Ovary (tissue), 10 donors: ENCODE measurements at regions of chr2 and their contacts with region 1.

Region 1: DNA sequence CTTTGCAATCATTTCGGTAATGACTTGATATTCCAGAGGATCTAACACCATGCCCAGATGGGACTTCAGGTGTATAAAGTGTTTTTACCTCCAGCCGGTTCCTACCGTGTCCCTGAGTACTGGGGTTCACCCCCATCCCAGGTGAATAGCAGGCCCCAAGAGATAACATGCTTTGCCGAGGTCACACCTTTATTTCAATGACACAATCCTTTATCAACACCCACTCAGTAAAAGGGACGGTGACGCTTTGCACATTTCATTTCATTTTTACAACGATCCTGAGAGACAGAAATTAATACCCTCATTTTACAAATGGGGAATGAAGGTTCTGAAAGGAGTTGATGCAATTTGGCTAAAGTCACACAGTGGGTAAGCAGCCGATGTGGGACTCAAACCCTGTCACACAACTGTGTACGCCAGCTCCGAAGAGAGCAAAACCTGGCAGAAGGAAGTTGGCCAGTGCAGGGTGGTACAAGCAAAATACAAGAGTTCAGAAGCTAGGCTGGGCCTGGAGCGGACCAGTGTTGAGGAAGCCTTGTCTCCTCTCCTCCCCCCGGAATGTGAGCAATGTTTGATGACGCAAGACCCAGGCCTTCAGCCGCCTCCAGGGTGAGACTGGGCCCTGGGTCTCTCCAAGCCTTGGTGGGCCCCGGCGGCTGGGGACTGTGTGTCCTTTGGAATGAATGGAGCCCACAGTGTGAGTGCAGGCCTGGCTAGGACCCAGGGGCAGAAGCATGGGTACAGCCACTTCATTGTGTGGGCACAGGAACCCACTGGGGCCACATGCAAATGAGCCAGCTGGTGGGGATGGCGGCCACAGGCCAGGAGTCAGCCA is 139.6 kb upstream of the MYCN start:
- DNase-seq: no peak
- H3K4me3 ChIP-seq: no peak overlapping the region
- H3K27ac ChIP-seq: no peak overlapping the region
- H3K4me1 ChIP-seq: no peaks in the 10 kb centered on the region
- H3K27me3 ChIP-seq: no peaks in the 10 kb centered on the region
- CTCF ChIP-seq: no peak
- EP300 ChIP-seq: no peak
- POLR2A ChIP-seq: no peak

Region 2: GRCh38 chr2:15730545-15731212 is 70.0 kb before region 1 on chr2:
- intact Hi-C with region 1: loop called in 1 of 4 experiments (anchors 5 kb)
- DNase-seq: peak; percentile 96 to 99 (median 98)
- H3K4me3 ChIP-seq: no peak overlapping the region
- H3K27ac ChIP-seq: peak overlapping the region in 1 of 2 donors; percentile 76
- H3K4me1 ChIP-seq: peaks cover 31% of the 10 kb centered on the region
- H3K27me3 ChIP-seq: no peaks in the 10 kb centered on the region
- CTCF ChIP-seq: no peak
- EP300 ChIP-seq: no peak
- POLR2A ChIP-seq: no peak

Region 3: GRCh38 chr2:15782009-15782751 is 18.5 kb before region 1 on chr2:
- intact Hi-C with region 1: no loop called
- DNase-seq: no peak
- H3K4me3 ChIP-seq: no peak overlapping the region
- H3K27ac ChIP-seq: no peak overlapping the region
- H3K4me1 ChIP-seq: no peaks in the 10 kb centered on the region
- H3K27me3 ChIP-seq: no peaks in the 10 kb centered on the region
- CTCF ChIP-seq: no peak
- EP300 ChIP-seq: no peak
- POLR2A ChIP-seq: no peak

Region 4: GRCh38 chr2:15939854-15940660 is 139.3 kb after region 1 on chr2 and contains the start of gene MYCN:
- intact Hi-C with region 1: no loop called
- DNase-seq: peak; percentile 52 to 72 (median 56)
- H3K4me3 ChIP-seq: peak within 1 kb of the TSS; percentile 44
- H3K27ac ChIP-seq: no peak within 1 kb of the TSS
- H3K4me1 ChIP-seq: no peaks in the 10 kb centered on the region
- H3K27me3 ChIP-seq: no peaks in the 10 kb centered on the region
- CTCF ChIP-seq: peak in 1 of 3 donors; percentile 27
- EP300 ChIP-seq: no peak
- POLR2A ChIP-seq: no peak
- total RNA-seq, gene MYCN: 1.2 to 7.0 (median 2.1) TPM